Naive thymus-derived CD8-positive, alpha-beta T cell (primary cell): ENCODE measurements at regions of chr11 and their contacts with region 1.

Region 1: DNA sequence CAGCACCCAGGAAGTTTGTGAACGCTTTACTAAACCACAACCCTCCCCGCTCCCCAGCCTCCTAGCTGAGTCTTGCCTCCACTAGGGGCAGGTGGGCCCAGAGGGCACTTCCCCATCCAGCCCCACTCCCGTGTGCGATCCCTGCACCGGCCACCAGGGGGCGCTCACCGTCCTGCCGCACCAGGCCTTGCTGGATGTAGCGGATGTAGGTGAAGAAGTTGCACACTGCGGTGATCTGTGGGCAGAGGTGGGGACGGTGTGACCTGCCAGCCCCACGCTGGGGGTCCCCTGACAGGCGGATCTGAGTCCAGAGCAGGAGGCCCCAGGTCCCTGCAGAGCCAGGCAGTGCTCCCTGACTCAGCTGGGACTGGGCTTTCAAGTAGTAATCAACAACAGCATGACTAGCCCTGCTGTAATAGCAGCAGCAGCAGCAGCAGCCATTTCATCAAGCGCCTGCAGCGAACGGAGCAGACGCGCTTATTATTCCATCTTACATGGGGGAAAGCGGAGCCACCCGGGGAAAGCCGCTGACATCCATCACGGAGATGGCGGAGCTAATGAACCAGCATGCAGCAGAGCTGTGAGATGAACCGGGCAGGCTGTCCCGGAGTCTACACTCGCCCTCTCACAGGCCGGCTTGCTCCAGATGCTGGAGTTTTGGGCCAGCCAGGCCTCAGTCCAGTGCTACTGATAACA is 7.9 kb upstream of the FADS3 start:
- DNase-seq: peak; percentile 84 to 97 (median 93)
- ATAC-seq: peak; percentile 95 to 96
- H3K4me3 Mint-ChIP-seq: peak overlapping the region in 1 of 10 donors; percentile 22
- H3K27ac Mint-ChIP-seq: peak overlapping the region; percentile 6 to 94 (median 70)
- H3K4me1 Mint-ChIP-seq: peaks cover 4 to 11% (median 6%) of the 10 kb centered on the region in 4 donors
- H3K27me3 Mint-ChIP-seq: peaks cover 0 to 13% (median 4%) of the 10 kb centered on the region in 5 donors

Region 2: GRCh38 chr11:62004473-62004872 is 105.2 kb after region 1 on chr11:
- POLR2A ChIA-PET with region 1: no interaction called
- DNase-seq: no peak
- ATAC-seq: no peak
- H3K4me3 Mint-ChIP-seq: no peak overlapping the region
- H3K27ac Mint-ChIP-seq: peak overlapping the region in 1 of 10 donors; percentile 65
- H3K4me1 Mint-ChIP-seq: no peaks in the 10 kb centered on the region
- H3K27me3 Mint-ChIP-seq: peaks cover 0 to 4% (median 2%) of the 10 kb centered on the region in 5 donors

Region 3: DNA sequence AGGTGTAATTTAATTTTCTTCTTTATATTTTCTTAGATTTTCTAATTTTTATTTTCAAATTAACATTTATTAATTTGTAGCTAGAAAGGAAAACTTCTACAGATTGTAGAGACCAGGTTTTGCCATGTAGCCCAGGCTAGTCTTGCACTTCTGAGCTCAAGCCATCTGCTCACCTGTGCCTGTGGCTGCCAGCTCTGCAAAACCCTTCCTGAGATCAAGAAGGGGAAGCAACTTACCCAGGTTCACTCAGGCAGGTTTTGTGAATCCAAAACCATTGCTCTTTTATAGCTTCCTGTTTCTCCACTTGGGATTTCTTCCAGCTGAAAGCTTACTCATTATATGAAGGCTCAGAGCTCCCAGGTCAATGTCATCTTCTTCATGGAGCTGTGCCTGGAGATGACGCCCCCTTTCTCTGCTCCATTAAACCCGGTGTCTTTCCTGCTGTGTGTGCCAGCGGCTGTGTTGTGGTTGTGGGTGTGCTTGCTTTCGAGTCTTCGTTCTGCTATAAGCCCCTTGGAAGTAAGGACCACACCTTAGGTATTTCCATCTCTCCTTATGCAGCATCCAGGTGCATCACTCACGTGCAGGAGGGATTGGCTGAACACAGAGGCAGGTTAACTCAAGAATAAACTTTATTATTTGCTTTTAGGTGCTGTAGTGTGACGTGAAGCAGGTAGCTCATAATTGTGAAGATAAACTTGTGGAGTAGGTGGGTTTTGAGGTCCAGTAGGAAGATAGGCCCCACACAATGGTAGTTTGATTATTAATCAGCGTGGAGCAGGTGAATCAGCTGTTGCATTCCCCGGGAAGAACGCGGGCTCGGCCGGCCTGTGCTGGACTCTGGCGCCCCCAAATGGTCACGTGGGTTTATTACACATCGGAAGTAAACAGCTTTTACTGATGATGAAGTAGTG is 182.3 kb after region 1 on chr11:
- POLR2A ChIA-PET with region 1: interaction called, 16 read pairs
- DNase-seq: peak; percentile 63 to 87 (median 78)
- ATAC-seq: peak; percentile 84 to 85
- H3K4me3 Mint-ChIP-seq: peak overlapping the region in 9 of 10 donors; percentile 1 to 68 (median 40)
- H3K27ac Mint-ChIP-seq: peak overlapping the region in 9 of 10 donors; percentile 11 to 93 (median 83)
- H3K4me1 Mint-ChIP-seq: peaks cover 5 to 8% (median 7%) of the 10 kb centered on the region in 4 donors
- H3K27me3 Mint-ChIP-seq: peaks cover 0 to 2% (median 0%) of the 10 kb centered on the region in 5 donors